Ascending aorta (tissue), 2 donors: ENCODE measurements at regions of chr16 and their contacts with region 1.

Region 1: DNA sequence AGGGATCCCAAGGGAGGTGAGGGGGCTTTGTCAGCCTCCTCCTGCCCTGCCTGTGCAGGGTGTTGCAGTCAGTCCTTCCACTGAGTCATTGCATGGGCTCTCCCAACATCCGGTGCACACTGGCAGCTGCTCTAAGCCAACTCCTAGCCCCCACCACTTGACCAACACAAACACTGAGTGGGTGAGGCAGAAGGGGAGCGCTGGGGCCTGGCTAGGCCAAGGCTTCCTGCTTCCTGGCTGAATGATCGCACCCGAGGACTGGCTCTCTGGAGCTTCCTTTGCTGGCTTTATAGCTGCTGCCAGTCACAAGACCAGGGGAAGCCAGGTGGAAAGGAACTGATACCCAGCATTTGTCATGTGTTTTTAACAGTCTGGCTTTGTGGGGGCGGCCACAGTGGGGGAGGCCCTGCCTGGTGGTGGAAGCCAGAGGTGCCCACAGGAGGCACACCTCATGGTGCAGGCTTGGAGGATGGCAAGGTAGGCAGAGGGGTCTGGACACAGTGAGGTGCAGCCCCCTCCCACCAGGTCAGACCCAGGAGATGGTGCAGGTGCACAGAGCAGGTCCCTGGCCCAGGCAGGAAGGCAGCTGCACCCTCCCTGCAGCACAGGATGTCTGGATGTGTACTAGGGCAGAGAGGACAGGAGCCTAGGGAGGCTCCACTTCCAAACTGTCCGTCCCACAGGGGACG is 6.8 kb downstream of the MPG start:
- DNase-seq: peak; percentile 84 to 96
- H3K4me3 ChIP-seq: peak overlapping the region in 1 of 2 donors; percentile 30
- H3K27ac ChIP-seq: peak overlapping the region; percentile 87 to 92
- H3K4me1 ChIP-seq: peaks cover 33 to 39% of the 10 kb centered on the region in 2 donors
- H3K27me3 ChIP-seq: no peaks in the 10 kb centered on the region
- CTCF ChIP-seq: no peak

Region 2: GRCh38 chr16:61149-61878 is 23.5 kb before region 1 on chr16:
- intact Hi-C with region 1: no loop called
- DNase-seq: no peak
- H3K4me3 ChIP-seq: no peak overlapping the region
- H3K27ac ChIP-seq: no peak overlapping the region
- H3K4me1 ChIP-seq: peaks cover 6% of the 10 kb centered on the region in 2 donors
- H3K27me3 ChIP-seq: no peaks in the 10 kb centered on the region
- CTCF ChIP-seq: no peak

Region 3: DNA sequence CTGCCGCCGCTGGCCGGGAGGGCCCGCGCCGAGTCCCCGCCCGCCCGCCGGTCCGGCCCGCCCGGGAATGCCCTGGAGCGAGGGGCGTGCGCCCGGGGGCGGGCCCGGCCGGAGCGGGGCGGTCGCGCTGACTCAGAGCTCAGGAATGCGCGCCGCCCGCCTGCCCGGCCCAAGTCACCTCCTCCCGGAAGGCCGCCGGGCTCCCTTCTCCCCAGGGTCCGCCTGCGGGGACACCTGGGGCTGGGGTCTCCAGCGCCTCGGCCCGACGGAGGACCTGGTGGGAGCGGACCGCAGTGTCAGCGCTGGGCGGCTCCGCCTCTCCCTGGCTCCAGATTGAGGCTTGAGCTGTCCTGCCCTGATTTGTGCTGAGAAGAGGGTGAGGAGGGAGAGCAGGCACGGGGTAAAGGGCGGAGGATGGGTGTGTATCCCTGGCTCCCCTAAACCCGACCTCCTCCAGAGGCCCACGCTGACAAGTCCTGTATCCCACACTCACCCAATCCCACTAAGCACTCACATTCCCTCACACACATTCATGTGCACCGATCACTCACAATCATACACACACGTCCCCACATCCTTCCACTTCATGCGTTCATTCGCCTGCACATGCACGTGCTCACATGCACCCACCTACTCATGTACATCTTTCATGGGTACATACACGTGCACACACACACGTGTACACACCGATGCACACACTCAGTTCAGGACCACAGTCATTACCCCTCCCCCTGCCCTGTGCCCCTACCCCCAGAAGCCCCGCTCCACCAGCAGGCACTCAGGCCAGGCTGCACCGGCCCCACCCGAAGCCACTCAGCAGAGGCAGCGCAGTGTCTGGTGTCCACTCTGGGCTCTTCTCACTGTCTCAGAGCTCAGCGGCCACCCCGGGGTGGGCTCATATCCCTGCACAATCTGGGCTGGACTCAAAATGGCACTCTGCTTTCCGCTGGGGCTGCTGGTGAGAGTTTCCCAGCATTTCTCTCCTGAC is 12.0 kb before region 1 on chr16 and contains the start of gene RHBDF1:
- intact Hi-C with region 1: loop called (anchors 1 kb)
- DNase-seq: peak in 1 of 2 donors; percentile 77
- H3K4me3 ChIP-seq: peak within 1 kb of the TSS; percentile 71 to 89
- H3K27ac ChIP-seq: peak within 1 kb of the TSS; percentile 97 to 100
- H3K4me1 ChIP-seq: peaks cover 24 to 69% of the 10 kb centered on the region in 2 donors
- H3K27me3 ChIP-seq: no peaks in the 10 kb centered on the region
- CTCF ChIP-seq: no peak
- total RNA-seq, gene RHBDF1: 146 TPM